SK-N-SH (cell line): ENCODE measurements at regions of chr9 and their contacts with region 1.

Region 1: GRCh38 chr9:101727612-101728524 is 10.6 kb downstream of the GRIN3A start:
- DNase-seq: peak; percentile 54
- H3K4me3 ChIP-seq: no peak overlapping the region; a peak in 1 of 4 replicates
- H3K27ac ChIP-seq: no peak overlapping the region
- H3K4me1 ChIP-seq: no peaks in the 10 kb centered on the region
- H3K27me3 ChIP-seq: no peaks in the 10 kb centered on the region
- CTCF ChIP-seq: peak; percentile 63
- EP300 ChIP-seq: no peak
- RAD21 ChIP-seq: peak; percentile 56

Region 2: GRCh38 chr9:101711330-101711941 is 16.4 kb before region 1 on chr9:
- CTCF ChIA-PET with region 1: interaction called, 19 read pairs
- POLR2A ChIA-PET with region 1: no interaction called
- DNase-seq: peak; percentile 30
- H3K4me3 ChIP-seq: no peak overlapping the region; a peak in 1 of 4 replicates
- H3K27ac ChIP-seq: no peak overlapping the region
- H3K4me1 ChIP-seq: no peaks in the 10 kb centered on the region; a peak in 1 of 4 replicates
- H3K27me3 ChIP-seq: no peaks in the 10 kb centered on the region
- CTCF ChIP-seq: peak; percentile 77
- EP300 ChIP-seq: no peak
- RAD21 ChIP-seq: no peak

Region 3: DNA sequence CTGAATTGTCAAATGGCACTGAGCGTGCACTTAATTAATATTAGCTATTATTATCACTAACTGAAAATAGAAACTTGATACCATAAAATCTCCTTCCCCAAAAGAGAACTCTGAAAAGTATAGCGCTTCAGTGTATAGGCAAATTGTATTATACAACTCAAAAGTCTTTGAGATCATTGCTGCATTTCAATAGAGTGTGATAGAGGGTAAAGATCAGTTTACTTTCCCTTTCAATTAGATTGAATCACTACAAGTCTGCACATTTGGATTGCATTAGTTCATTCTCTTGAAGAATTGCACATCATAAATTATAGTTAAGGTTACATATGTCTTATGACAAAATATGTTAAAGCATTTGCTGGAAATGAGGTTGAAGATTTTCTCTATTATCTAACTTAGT is 24.0 kb after region 1 on chr9:
- CTCF ChIA-PET with region 1: interaction called, 10 read pairs
- POLR2A ChIA-PET with region 1: no interaction called
- DNase-seq: no peak
- H3K4me3 ChIP-seq: no peak overlapping the region
- H3K27ac ChIP-seq: no peak overlapping the region
- H3K4me1 ChIP-seq: no peaks in the 10 kb centered on the region
- H3K27me3 ChIP-seq: no peaks in the 10 kb centered on the region
- CTCF ChIP-seq: no peak
- EP300 ChIP-seq: no peak
- RAD21 ChIP-seq: no peak